Left ventricle myocardium inferior (tissue), 1 donor: ENCODE measurements at regions of chr6 and their contacts with region 1.

Region 1: GRCh38 chr6:149834513-149835481 is 29.4 kb downstream of the LRP11 start:
- DNase-seq: no peak
- H3K4me3 ChIP-seq: no peak overlapping the region
- H3K27ac ChIP-seq: no peak overlapping the region
- H3K4me1 ChIP-seq: no peaks in the 10 kb centered on the region
- H3K27me3 ChIP-seq: no peaks in the 10 kb centered on the region
- CTCF ChIP-seq: peak; percentile 93

Region 2: DNA sequence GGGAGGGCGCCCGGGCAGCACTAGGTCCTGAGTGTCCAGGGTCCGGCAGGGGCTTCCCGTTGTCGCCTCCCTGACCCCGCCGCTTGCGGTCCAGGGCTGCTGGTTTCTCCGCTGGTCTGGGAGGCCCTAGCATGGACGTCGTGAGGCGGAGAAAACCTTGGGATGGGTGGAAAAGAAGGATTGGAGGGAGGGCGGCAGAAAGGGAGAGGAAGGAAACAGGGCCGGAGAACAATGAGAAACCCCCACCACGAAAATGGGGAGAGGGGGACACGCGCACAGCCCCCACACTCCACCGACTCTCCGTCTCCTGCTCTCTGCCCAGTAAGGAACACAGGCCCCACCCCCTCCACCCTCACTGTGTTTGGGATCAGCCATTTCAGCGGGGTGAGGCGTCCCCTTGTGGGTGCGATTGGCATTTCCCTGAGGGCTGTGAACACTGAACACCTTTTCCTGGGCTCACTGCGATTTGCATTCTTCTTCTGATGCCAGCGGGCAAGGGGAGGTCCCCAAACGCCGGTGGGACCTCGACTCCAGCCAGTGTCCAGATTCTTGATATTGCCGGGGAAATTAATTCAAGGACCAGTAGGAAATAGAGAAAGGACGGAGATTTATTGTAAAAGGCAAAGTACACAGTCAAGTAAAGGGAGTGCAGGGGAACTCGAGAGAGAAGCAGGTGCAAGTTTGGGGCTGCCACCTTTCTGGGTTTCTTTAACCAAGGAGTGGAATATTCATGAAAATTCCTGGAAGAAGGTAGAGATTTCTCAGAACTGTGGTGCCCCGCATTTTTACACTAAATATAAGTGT is 91.4 kb after region 1 on chr6:
- intact Hi-C with region 1: loop called (anchors 5 kb)
- DNase-seq: peak; percentile 89
- H3K4me3 ChIP-seq: peak overlapping the region; percentile 69
- H3K27ac ChIP-seq: peak overlapping the region; percentile 70
- H3K4me1 ChIP-seq: peaks cover 32% of the 10 kb centered on the region
- H3K27me3 ChIP-seq: peaks cover 50% of the 10 kb centered on the region
- CTCF ChIP-seq: peak; percentile 94

Region 3: GRCh38 chr6:150016324-150017185 is 181.8 kb after region 1 on chr6:
- intact Hi-C with region 1: loop called (anchors 10 kb)
- DNase-seq: no peak
- H3K4me3 ChIP-seq: no peak overlapping the region
- H3K27ac ChIP-seq: no peak overlapping the region
- H3K4me1 ChIP-seq: peaks cover 3% of the 10 kb centered on the region
- H3K27me3 ChIP-seq: peaks cover 81% of the 10 kb centered on the region
- CTCF ChIP-seq: peak; percentile 80